ENCODE measurements at regions of chr10 and their contacts with region 1.

Region 1: GRCh38 chr10:124709861-124710260 is 34.3 kb downstream of the FAM53B start:
- DNase-seq: no peak
- H3K4me3 ChIP-seq: no peak overlapping the region
- H3K27ac ChIP-seq: peak overlapping the region; percentile 25 to 76 (median 58)
- H3K4me1 ChIP-seq: peaks cover 0 to 73% (median 59%) of the 10 kb centered on the region in 4 donors
- H3K27me3 ChIP-seq: no peaks in the 10 kb centered on the region
- CTCF ChIP-seq: no peak
- EP300 ChIP-seq: no peak
- POLR2A ChIP-seq: no peak

Region 2: DNA sequence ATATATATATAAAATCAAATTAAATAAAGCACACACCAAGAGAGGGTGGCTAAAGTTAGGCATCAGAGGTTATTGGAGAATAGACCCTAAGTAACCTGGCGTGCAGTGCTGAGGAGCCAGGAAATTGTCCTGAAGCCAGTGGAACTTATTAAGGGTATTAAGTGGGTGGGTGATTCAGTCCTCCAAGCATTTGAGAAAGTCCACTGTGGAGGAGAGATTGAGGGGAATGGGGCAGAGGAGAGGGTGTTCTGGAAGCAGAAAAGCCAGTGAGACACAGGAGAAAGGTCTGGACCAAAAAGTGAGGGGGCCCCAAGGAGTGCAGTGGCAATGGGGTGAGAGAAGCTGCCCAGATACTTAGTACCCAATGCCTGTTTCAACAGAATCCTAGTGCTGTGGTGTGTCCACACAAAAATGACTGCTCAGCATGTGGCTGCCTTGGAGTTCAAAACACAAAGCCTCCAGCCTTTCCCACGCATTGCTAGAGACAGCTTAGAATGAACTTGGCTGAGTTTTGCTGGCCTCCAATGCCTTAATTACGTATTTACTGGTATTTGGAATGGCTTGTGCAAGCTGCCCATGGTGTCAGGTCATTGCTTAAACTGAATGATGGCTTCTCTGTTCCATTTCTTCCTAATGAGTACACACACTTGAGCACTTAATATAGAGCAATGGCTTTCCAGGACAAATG is 571.5 kb before region 1 on chr10:
- intact Hi-C with region 1: no loop called
- DNase-seq: peak; percentile 61
- H3K4me3 ChIP-seq: no peak overlapping the region
- H3K27ac ChIP-seq: peak overlapping the region in 1 of 4 donors; percentile 21
- H3K4me1 ChIP-seq: no peaks in the 10 kb centered on the region
- H3K27me3 ChIP-seq: no peaks in the 10 kb centered on the region
- CTCF ChIP-seq: no peak
- EP300 ChIP-seq: no peak
- POLR2A ChIP-seq: no peak

Region 3: DNA sequence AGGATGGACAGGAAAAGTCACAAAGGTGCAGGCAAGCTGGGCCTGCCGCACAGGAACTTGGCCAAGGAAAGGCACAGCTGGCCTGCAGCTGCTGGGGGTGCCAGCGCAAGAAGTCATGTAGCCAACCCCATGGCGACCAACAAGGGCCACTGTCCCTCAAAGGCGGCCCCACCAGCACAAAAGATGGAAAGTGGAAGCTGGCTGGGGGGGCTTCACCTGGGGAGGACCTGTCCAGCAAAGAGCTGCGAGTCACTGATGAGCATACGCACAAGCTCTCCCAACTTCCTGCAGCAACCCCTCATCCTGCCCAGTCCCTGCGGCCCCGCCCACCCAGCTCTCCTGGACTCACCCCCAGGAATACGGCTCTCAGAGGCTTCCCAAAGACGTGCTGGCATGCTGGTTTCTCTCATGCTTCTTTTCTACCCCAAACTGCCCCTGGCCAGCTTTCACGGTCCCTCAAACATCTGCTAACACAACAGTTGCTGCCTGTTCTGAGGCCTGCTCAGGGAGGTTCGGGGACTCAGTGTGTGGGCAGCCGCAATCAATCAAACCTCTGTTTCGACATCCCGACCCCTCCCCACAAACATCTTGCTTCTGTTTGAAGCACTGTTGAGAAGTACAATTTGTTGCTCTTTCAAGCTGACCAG is 33.3 kb before region 1 on chr10:
- intact Hi-C with region 1: loop called (anchors 1 kb)
- DNase-seq: no peak
- H3K4me3 ChIP-seq: no peak overlapping the region
- H3K27ac ChIP-seq: no peak overlapping the region
- H3K4me1 ChIP-seq: peaks cover 0 to 74% (median 70%) of the 10 kb centered on the region in 4 donors
- H3K27me3 ChIP-seq: no peaks in the 10 kb centered on the region
- CTCF ChIP-seq: no peak
- EP300 ChIP-seq: no peak
- POLR2A ChIP-seq: no peak